Thyroid gland (tissue), 4 donors: ENCODE measurements at regions of chr14 and their contacts with region 1.

Region 1: DNA sequence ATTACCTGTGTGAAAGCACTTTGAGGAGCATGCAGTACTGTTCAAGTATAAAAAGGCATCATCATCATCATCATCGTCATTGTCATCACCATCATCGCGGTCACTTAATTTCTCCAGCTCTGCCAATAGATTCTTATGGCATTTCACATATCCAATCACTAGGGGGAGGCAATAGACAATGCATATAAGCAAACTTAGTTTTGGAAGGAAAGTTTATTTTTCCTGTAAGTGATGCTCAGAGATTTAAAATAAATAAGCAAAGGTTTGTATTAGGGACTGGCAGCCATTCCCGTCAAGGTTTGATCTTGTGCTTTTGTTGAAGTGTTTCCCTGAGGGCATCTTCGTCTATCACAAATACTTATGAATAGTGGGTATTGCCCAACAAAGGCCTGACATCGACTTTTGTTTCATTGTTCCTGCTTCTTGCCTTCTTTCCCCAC is 127.4 kb downstream of the KTN1 start:
- DNase-seq: no peak
- H3K4me3 ChIP-seq: no peak overlapping the region
- H3K27ac ChIP-seq: no peak overlapping the region
- H3K4me1 ChIP-seq: peaks cover 0 to 5% of the 10 kb centered on the region in 2 donors
- H3K27me3 ChIP-seq: no peaks in the 10 kb centered on the region
- CTCF ChIP-seq: peak; percentile 31 to 77 (median 52)
- POLR2A ChIP-seq: no peak

Region 2: DNA sequence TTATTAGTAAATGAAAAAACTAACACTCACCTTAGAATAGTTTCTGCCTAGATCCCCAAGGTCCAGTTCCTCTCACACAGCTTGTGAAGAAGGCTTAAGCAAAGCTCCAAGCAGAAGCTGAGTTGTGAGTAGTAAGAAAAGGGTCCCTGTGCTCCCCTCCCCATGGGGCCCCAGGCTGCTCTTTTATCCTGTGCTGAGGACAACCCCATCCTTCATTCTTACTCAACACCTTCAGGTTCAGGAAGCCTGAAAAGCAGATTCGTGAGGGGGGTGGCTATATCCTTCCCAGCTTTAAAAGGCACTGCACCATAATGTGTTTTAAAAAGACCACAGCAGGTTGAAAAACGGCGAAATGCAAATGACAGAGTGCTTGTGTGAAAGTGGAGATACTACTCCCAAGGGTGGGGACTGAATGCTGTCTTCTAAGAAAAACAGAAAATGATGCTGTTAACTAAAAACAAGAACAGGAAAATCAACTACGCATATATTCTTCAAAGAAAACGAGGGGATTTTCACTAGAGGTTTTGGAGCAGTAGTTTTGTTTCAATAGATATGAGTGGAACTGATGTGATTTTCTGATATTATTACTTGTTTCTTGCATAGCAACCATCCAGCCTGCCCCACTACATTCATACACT is 55.3 kb after region 1 on chr14:
- intact Hi-C with region 1: no loop called
- DNase-seq: no peak
- H3K4me3 ChIP-seq: no peak overlapping the region
- H3K27ac ChIP-seq: no peak overlapping the region
- H3K4me1 ChIP-seq: peaks cover 0 to 7% of the 10 kb centered on the region in 2 donors
- H3K27me3 ChIP-seq: no peaks in the 10 kb centered on the region
- CTCF ChIP-seq: no peak
- POLR2A ChIP-seq: no peak

Region 3: DNA sequence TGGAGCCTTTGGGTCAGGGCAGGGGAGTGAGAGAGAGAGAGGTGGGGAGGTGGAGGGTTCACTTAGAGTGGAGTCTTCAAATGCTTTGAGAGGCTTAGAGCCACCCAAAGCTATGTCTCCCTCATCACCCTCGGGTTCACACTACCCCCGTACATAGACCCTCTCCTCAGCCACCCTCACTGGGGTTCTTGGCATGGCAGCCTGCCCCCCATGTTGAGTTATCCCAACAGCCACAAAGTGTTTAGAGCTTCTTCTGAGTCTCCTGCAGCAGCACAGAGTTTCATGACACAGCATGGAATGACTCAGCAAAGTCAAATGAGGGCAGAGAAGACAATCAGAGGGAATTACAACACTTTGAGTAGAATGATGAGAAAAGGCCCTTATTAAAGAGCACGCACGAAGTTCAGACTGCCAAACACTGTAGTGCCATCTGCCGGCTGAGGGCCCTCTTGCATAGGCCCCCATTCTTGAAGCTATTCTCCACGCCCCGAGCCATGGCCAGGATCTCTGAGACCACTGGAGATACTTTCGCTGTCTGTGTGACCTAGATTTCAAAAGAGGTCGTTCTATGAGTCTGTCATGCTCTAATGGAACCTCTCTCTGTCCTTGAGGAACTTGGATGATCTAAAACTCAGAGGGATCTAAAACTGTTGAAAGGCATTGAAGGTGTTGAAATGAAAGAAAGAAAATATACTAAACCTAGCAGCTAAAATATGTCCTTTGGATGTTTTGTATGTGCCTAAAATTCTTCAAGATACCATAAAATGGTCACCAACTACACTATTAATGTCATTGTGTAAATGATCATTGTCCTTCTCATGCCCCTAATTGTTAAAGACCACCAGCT is 632.7 kb after region 1 on chr14:
- intact Hi-C with region 1: loop called (anchors 10 kb)
- DNase-seq: peak; percentile 76 to 79
- H3K4me3 ChIP-seq: no peak overlapping the region
- H3K27ac ChIP-seq: peak overlapping the region in 1 of 3 donors; percentile 42
- H3K4me1 ChIP-seq: peaks cover 0 to 13% of the 10 kb centered on the region in 2 donors
- H3K27me3 ChIP-seq: no peaks in the 10 kb centered on the region
- CTCF ChIP-seq: peak; percentile 43 to 88 (median 78)
- POLR2A ChIP-seq: no peak

Region 4: DNA sequence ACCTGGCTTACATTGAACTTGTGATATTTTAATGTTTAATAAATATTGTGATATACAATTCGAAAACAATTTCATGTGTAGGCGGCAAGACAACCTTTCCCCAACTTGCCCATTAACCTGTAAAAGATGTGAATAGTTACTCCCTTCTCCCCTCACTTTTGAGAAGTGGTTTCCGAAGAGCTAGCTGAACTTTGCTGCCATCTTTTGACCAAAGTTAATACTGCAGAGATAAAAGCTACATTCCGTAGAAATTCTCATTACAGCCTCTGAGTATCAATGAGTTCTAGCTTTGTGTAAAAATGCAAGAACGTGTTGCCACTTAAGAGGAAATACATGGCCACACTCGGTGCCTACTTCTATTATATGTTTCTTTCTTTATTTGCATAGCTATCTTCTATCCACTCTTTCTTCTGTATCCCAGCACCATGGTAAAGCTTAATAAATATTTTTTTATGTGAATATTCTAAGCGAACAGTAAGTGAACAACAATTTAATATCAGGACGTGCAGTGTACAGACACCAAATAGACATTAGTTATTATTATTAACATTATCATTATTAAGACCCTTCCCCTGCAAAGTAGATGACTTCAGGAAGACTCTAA is 767.1 kb after region 1 on chr14:
- intact Hi-C with region 1: loop called (anchors 10 kb)
- DNase-seq: no peak
- H3K4me3 ChIP-seq: no peak overlapping the region
- H3K27ac ChIP-seq: no peak overlapping the region
- H3K4me1 ChIP-seq: no peaks in the 10 kb centered on the region
- H3K27me3 ChIP-seq: no peaks in the 10 kb centered on the region
- CTCF ChIP-seq: peak; percentile 48 to 82 (median 67)
- POLR2A ChIP-seq: no peak